ENCODE measurements at regions of chr4 and their contacts with region 1.

Region 1: GRCh38 chr4:8340781-8341241 is 71.3 kb downstream of the HTRA3 start:
- DNase-seq: peak; percentile 72 to 85
- ATAC-seq: peak; percentile 82 to 87
- H3K4me3 ChIP-seq: no peak overlapping the region
- H3K27ac ChIP-seq: peak overlapping the region; percentile 60 to 79 (median 76)
- H3K4me1 ChIP-seq: peaks cover 20 to 23% of the 10 kb centered on the region in 2 donors
- H3K27me3 ChIP-seq: no peaks in the 10 kb centered on the region
- CTCF ChIP-seq: no peak
- POLR2A ChIP-seq: no peak

Region 2: GRCh38 chr4:8274765-8275547 is 65.9 kb before region 1 on chr4:
- in situ Hi-C with region 1: no loop called
- intact Hi-C with region 1: loop called (anchors 5 kb)
- DNase-seq: peak; percentile 69 to 90
- ATAC-seq: peak; percentile 69 to 81
- H3K4me3 ChIP-seq: no peak overlapping the region
- H3K27ac ChIP-seq: peak overlapping the region; percentile 40 to 65 (median 42)
- H3K4me1 ChIP-seq: peaks cover 29 to 43% of the 10 kb centered on the region in 2 donors
- H3K27me3 ChIP-seq: no peaks in the 10 kb centered on the region
- CTCF ChIP-seq: peak in 4 of 5 experiments; percentile 21 to 59 (median 48)
- POLR2A ChIP-seq: no peak

Region 3: GRCh38 chr4:8440492-8441341 is 99.9 kb after region 1 on chr4 and contains the starts of genes ACOX3 and TRMT44:
- in situ Hi-C with region 1: no loop called
- intact Hi-C with region 1: no loop called
- DNase-seq: peak; percentile 76 to 88
- ATAC-seq: peak; percentile 92 to 93
- H3K4me3 ChIP-seq: peak within 1 kb of the TSS; percentile 83 to 99 (median 88)
- H3K27ac ChIP-seq: peak within 1 kb of the TSS; percentile 95 to 99 (median 98)
- H3K4me1 ChIP-seq: peaks cover 42 to 59% of the 10 kb centered on the region in 2 donors
- H3K27me3 ChIP-seq: no peaks in the 10 kb centered on the region
- CTCF ChIP-seq: peak in 3 of 5 experiments; percentile 7 to 45 (median 32)
- POLR2A ChIP-seq: peak; percentile 60 to 76
- total RNA-seq, gene ACOX3: 19.0 to 32.9 (median 22.1) TPM
- total RNA-seq, gene TRMT44: 7.5 to 16.4 (median 10.2) TPM